ENCODE measurements at regions of chr18 and their contacts with region 1.

Region 1: GRCh38 chr18:13539050-13539449 is 187.3 kb downstream of the FAM210A start:
- DNase-seq: peak in 7 of 9 donors; percentile 68 to 86 (median 79)
- ATAC-seq: peak; percentile 92
- H3K4me3 ChIP-seq: no peak overlapping the region
- H3K4me3 Mint-ChIP-seq: peak overlapping the region; percentile 70 to 85 (median 74)
- H3K27ac ChIP-seq: peak overlapping the region; percentile 66
- H3K27ac Mint-ChIP-seq: peak overlapping the region; percentile 64 to 97 (median 90)
- H3K4me1 ChIP-seq: peaks cover 11 to 36% of the 10 kb centered on the region in 2 donors
- H3K4me1 Mint-ChIP-seq: peaks cover 28 to 80% (median 70%) of the 10 kb centered on the region in 7 donors
- H3K27me3 ChIP-seq: no peaks in the 10 kb centered on the region
- H3K27me3 Mint-ChIP-seq: no peaks in the 10 kb centered on the region

Region 2: DNA sequence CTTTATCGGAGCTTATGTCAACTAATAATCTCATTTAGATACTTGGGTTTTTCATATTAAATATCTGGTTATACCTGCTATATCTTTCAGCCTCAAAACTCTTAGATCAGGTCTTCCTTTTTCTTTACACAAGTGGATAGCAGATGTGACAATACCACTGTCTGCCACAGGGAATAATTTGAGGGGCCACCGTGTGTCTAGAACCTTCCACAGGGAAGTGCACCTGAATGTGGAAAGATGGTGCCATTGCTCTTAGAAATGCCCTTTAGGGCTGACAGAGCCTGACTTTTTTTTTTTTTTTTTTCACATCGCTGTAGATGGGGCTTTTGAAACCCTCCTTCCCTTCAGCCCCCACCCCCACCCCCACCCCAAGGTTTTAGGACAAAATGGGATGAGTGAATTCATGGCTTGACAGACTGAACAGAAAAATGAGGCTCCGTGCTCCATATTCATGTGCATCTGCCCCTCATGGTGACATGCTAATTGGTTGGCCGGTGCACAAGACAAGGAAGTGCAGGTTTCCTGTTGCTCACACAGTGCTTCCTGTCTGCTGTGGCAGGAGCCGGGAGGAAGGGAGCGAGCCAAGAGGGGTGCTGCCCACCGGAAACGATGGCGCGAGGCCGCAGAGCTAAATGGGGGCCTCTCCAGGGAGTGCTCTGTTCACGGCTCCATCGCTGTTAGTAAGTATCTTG is 74.5 kb before region 1 on chr18:
- CTCF ChIA-PET with region 1: no interaction called
- POLR2A ChIA-PET with region 1: no interaction called
- intact Hi-C with region 1: loop called in 1 of 2 experiments (anchors 2 kb)
- DNase-seq: peak; percentile 37 to 70 (median 64)
- ATAC-seq: peak; percentile 93
- H3K4me3 ChIP-seq: peak overlapping the region; percentile 66
- H3K4me3 Mint-ChIP-seq: peak overlapping the region; percentile 87 to 100 (median 94)
- H3K27ac ChIP-seq: peak overlapping the region; percentile 66
- H3K27ac Mint-ChIP-seq: peak overlapping the region; percentile 88 to 99 (median 95)
- H3K4me1 ChIP-seq: peaks cover 16 to 45% of the 10 kb centered on the region in 2 donors
- H3K4me1 Mint-ChIP-seq: peaks cover 43 to 85% (median 83%) of the 10 kb centered on the region in 7 donors
- H3K27me3 ChIP-seq: no peaks in the 10 kb centered on the region
- H3K27me3 Mint-ChIP-seq: no peaks in the 10 kb centered on the region

Region 3: DNA sequence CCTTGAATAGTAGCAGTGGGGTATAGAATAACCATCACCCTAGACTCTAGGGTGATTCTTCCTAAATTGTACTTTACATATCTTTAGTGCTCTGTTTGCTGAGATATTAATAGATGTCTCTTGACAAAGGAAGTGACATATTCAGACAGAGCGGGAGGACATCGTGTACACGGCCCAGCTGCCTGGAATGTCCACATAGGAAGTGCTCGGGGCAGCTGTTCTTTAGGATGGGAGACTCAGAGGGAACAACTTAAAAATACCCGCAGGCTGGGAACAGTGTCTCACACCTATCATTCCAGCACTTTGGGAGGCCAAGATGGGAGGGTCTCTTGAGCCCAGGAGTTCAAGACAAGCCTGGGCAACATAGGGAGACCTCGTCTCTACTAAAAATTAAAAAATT is 18.7 kb before region 1 on chr18:
- CTCF ChIA-PET with region 1: interaction called, 3 read pairs
- POLR2A ChIA-PET with region 1: interaction called, 3 read pairs
- intact Hi-C with region 1: loop called in 1 of 2 experiments (anchors 2 kb)
- DNase-seq: no peak
- ATAC-seq: no peak
- H3K4me3 ChIP-seq: no peak overlapping the region
- H3K4me3 Mint-ChIP-seq: no peak overlapping the region
- H3K27ac ChIP-seq: no peak overlapping the region
- H3K27ac Mint-ChIP-seq: peak overlapping the region in 6 of 9 donors; percentile 15 to 89 (median 48)
- H3K4me1 ChIP-seq: no peaks in the 10 kb centered on the region
- H3K4me1 Mint-ChIP-seq: peaks cover 4 to 53% (median 34%) of the 10 kb centered on the region in 7 donors
- H3K27me3 ChIP-seq: no peaks in the 10 kb centered on the region
- H3K27me3 Mint-ChIP-seq: no peaks in the 10 kb centered on the region